ENCODE measurements at regions of chr20 and their contacts with region 1.

Region 1: GRCh38 chr20:37384683-37385174 is 38.8 kb downstream of the SRC start:
- DNase-seq: peak; percentile 47 to 79
- ATAC-seq: peak; percentile 16 to 21; a peak in 5 of 6 replicates
- H3K4me3 ChIP-seq: peak overlapping the region; percentile 55
- H3K27ac ChIP-seq: peak overlapping the region; percentile 96 to 98
- H3K4me1 ChIP-seq: peaks cover 86% of the 10 kb centered on the region
- CTCF ChIP-seq: peak; percentile 82
- EP300 ChIP-seq: no peak
- POLR2A ChIP-seq: no peak
- RAD21 ChIP-seq: peak; percentile 33 to 68; a peak in 4 of 5 replicates

Region 2: DNA sequence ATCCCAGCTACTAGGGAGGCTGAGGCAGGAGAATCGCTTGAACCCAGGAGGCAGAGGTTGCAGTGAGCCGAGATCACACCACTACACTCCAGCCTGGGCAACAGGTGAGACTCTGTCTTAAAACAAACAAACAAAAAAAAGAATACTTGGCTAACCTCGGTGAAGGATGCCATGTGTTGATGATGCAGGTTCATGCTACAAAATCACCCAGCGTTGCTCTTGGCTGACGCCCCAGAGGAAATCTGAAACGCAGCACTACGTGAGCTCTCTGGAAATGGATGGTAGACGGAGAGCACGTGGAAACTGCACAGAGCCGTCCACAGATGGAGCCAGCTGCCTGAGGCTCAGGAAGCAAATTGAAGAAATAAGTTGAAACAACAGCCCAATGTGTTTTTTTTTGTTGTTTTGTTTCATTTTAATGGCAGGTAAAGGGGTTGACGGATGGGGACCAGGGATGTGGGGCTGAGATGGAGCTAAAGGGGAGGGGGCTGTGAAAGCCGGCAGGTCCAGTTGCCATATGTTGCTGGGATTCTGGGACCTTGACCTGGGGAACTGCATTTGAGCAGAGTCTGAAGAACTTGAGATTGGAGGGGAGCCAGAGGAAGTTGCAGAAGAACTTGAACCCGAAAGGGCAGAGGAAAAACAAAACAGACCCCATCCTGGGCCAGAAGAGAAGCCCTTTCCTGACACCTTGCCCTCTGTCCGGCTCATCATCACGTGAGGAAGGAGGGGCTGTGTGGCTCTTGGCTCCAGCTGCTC is 108.1 kb before region 1 on chr20:
- CTCF ChIA-PET with region 1: interaction called, 113 read pairs
- POLR2A ChIA-PET with region 1: no interaction called
- DNase-seq: peak in 1 of 2 experiments; percentile 51
- ATAC-seq: peak; percentile 74 to 82; a peak in 4 of 6 replicates
- H3K4me3 ChIP-seq: no peak overlapping the region
- H3K27ac ChIP-seq: peak overlapping the region; percentile 41 to 67
- H3K4me1 ChIP-seq: peaks cover 11% of the 10 kb centered on the region
- CTCF ChIP-seq: peak; percentile 42
- EP300 ChIP-seq: no peak
- POLR2A ChIP-seq: no peak
- RAD21 ChIP-seq: peak; percentile 62 to 71

Region 3: DNA sequence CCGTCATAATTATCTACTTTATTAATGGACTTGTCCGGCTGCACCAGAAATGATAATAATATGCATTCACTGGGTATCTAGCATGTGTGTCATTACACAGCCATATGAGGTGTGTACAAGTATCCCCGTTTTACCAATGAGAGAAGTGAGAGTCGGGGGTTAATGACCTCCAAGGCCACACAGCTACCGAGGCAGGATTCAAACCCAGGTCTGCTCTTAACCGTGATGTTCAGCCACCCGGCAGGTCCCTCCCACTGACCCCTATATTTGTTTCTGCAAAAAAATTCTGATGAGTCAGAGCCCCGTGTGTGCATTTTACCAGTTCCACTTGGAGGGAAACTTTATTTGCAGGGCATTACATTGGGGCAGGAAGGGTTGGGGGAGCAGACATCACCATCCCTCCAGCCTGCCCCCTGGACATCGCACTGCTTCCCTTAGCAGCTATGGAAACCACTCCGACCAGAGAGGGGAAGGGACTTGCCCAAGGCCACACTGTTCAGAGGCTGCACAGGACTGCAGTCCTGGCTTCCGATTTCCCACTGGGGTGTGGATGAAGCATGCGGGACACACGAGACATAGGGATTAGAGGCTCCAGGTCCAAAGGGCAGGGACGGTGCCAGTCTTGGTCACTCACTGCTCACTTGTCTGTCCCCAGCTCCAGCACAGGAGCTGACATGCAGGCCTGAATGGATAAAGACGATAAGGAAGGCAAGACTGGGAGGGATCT is 48.9 kb before region 1 on chr20:
- CTCF ChIA-PET with region 1: interaction called, 15 read pairs
- POLR2A ChIA-PET with region 1: interaction called, 5 read pairs
- DNase-seq: peak in 1 of 2 experiments; percentile 48
- ATAC-seq: peak; percentile 77 to 82
- H3K4me3 ChIP-seq: no peak overlapping the region
- H3K27ac ChIP-seq: peak overlapping the region; percentile 91
- H3K4me1 ChIP-seq: peaks cover 34% of the 10 kb centered on the region
- CTCF ChIP-seq: no peak
- EP300 ChIP-seq: no peak
- POLR2A ChIP-seq: no peak
- RAD21 ChIP-seq: no peak

Region 4: GRCh38 chr20:37350649-37351574 is 33.8 kb before region 1 on chr20:
- CTCF ChIA-PET with region 1: interaction called, 28 read pairs
- POLR2A ChIA-PET with region 1: interaction called, 23 read pairs
- DNase-seq: no peak
- ATAC-seq: no peak
- H3K4me3 ChIP-seq: no peak overlapping the region
- H3K27ac ChIP-seq: peak overlapping the region in 1 of 2 experiments; percentile 100; a peak in 3 of 6 replicates
- H3K4me1 ChIP-seq: peaks cover 90% of the 10 kb centered on the region
- CTCF ChIP-seq: no peak
- EP300 ChIP-seq: no peak
- POLR2A ChIP-seq: no peak
- RAD21 ChIP-seq: no peak

Region 5: GRCh38 chr20:37365760-37366638 is 18.7 kb before region 1 on chr20:
- CTCF ChIA-PET with region 1: interaction called, 18 read pairs
- POLR2A ChIA-PET with region 1: no interaction called
- DNase-seq: no peak
- ATAC-seq: no peak
- H3K4me3 ChIP-seq: no peak overlapping the region
- H3K27ac ChIP-seq: no peak overlapping the region
- H3K4me1 ChIP-seq: peaks cover 17% of the 10 kb centered on the region
- CTCF ChIP-seq: no peak
- EP300 ChIP-seq: no peak
- POLR2A ChIP-seq: no peak
- RAD21 ChIP-seq: no peak